ENCODE measurements at regions of chr14 and their contacts with region 1.

Region 1: DNA sequence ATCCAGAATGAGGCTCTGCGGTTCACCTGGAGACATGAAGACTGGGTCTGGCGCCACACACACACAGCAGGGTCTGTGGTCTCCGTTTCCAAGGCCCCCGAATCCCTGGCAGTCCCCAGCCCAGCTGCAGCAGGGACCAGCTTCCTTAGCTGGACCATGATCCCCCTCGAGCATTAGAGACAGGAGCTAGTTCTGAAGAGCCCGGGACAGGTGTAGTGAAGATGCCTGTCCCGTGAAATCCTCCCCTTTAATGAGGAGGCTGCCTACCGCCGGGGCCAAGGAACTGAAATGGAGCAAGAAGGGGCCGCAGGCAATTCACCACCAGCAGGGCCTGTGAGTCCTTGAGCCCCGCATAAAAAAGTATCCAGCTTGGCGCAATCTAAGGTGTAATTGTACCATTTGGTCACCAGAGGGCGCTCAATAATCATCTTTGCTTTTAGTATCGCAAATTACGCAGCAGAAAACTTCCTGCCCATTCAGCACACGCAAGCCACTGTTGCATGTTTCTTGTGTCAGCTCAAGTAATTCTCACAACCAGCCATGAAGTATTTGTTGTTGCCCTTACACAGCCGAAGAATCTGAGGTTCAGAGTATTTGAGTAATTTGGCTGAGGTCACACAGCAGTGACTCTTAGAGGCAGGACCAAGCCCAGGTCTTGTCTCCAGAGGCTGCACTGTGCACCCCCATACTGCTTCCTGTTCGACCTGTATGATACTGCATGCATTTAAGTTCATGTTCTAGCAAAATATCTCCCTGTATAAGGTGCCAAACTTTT is 54.3 kb upstream of the PPP2R5C start:
- DNase-seq: peak; percentile 43 to 94 (median 61)
- ATAC-seq: peak; percentile 50 to 69 (median 62)
- H3K4me3 ChIP-seq: peak overlapping the region in 1 of 2 donors; percentile 19
- H3K4me3 Mint-ChIP-seq: peak overlapping the region; percentile 37 to 68 (median 50)
- H3K27ac ChIP-seq: peak overlapping the region; percentile 85
- H3K27ac Mint-ChIP-seq: peak overlapping the region; percentile 89 to 92
- H3K4me1 ChIP-seq: peaks cover 16 to 59% of the 10 kb centered on the region in 2 experiments
- H3K4me1 Mint-ChIP-seq: peaks cover 41 to 56% (median 42%) of the 10 kb centered on the region in 3 donors
- H3K27me3 ChIP-seq: no peaks in the 10 kb centered on the region
- H3K27me3 Mint-ChIP-seq: no peaks in the 10 kb centered on the region

Region 2: DNA sequence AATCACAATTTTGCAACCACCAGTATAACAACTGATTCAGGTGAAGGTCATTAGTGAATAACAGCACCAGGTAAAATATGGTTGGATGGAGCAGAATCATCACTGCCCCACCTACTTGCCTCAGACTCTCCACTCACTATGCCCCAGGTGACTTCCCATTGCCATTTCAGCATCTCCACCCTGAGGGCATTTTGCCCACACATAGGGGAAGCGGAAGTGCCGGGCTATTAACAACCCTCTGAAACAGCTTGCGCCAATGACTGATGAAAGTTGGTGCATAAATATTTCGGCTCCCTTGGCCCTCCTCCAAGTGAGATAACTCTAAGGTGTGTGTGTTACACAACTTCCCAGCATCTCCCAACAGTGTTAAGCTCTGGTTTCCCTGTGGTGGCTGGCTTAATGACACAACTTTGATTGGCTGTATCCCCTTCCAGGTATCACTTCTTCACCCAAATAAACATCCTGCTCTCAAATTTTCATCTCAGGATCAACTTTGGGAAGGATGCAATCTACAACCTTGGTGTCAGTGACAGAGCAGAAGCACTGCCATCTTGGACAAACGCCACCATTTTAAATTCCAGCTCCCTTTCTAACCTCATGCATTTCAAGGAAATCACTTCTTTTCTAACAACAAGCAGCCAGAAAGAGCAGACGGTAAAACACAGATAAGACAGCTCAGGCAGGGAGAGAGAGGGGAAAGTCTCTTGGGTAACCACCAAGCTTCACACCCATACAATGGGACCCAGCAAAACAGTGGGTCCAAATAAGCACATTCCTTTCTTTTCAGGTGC is 19.3 kb before region 1 on chr14:
- CTCF ChIA-PET with region 1: no interaction called
- POLR2A ChIA-PET with region 1: no interaction called
- DNase-seq: no peak
- ATAC-seq: no peak
- H3K4me3 ChIP-seq: no peak overlapping the region
- H3K4me3 Mint-ChIP-seq: no peak overlapping the region
- H3K27ac ChIP-seq: no peak overlapping the region
- H3K27ac Mint-ChIP-seq: no peak overlapping the region
- H3K4me1 ChIP-seq: no peaks in the 10 kb centered on the region
- H3K4me1 Mint-ChIP-seq: no peaks in the 10 kb centered on the region
- H3K27me3 ChIP-seq: peaks cover 0 to 5% of the 10 kb centered on the region in 2 experiments
- H3K27me3 Mint-ChIP-seq: peaks cover 6 to 21% of the 10 kb centered on the region in 2 donors

Region 3: GRCh38 chr14:101721951-101722661 is 14.9 kb after region 1 on chr14:
- CTCF ChIA-PET with region 1: interaction called in 1 of 2 experiments, 37 read pairs
- POLR2A ChIA-PET with region 1: interaction called in 1 of 2 experiments, 3 read pairs
- DNase-seq: peak; percentile 52 to 94 (median 84)
- ATAC-seq: peak; percentile 83 to 87 (median 84)
- H3K4me3 ChIP-seq: peak overlapping the region; percentile 30 to 42
- H3K4me3 Mint-ChIP-seq: peak overlapping the region; percentile 75 to 78 (median 78)
- H3K27ac ChIP-seq: peak overlapping the region; percentile 99
- H3K27ac Mint-ChIP-seq: peak overlapping the region; percentile 99 to 100
- H3K4me1 ChIP-seq: peaks cover 18 to 67% of the 10 kb centered on the region in 2 experiments
- H3K4me1 Mint-ChIP-seq: peaks cover 56 to 73% (median 59%) of the 10 kb centered on the region in 3 donors
- H3K27me3 ChIP-seq: no peaks in the 10 kb centered on the region
- H3K27me3 Mint-ChIP-seq: no peaks in the 10 kb centered on the region

Region 4: DNA sequence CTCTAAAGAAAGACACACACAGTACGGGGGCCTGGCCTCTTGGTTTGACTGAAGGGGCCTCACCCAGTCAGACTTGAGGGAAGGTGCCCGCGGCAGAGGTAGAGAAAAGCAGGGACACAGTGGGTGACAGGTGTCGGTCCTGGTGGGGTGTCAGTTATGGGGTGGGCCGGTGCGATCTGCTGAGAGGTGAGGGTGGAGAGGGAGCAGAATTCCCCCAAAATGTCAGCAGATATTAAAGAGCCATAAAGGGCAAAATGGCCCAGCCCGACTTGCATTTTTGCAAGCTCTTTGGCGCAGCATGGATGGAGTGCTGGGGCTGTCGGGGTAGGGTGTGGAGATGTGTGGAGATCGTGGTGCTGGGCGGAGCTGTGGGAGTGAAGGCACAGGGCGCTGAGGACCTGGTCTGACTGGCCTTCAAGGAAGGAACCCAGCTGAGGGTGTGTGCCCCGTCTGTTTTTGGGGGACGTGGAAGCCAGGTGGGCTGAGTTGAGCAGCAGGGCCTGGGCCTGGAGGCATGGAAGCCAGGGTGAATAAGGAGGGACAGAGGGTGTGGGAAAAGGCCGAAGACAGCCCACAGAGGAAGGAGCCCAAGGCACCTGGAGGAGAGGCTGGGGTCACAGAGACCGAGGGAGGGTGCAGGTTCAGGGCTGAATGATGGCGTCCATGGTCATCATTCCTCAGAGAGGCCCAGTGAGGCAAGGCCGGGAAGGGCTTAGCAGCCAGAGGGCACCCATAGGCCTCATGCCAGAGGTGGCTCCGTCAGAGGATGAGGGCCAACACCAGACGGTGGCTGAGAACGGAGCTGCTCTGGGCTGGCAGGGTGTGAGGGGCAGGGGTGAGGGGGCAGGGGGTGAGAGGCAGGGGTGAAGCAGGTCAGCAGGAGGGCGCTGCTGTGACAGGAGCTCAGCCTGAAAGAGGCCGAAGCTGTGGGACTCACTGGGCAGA is 208.9 kb after region 1 on chr14:
- CTCF ChIA-PET with region 1: no interaction called
- POLR2A ChIA-PET with region 1: no interaction called
- DNase-seq: no peak
- ATAC-seq: peak in 1 of 4 experiments; percentile 9
- H3K4me3 ChIP-seq: no peak overlapping the region
- H3K4me3 Mint-ChIP-seq: no peak overlapping the region
- H3K27ac ChIP-seq: no peak overlapping the region
- H3K27ac Mint-ChIP-seq: peak overlapping the region; percentile 34 to 52
- H3K4me1 ChIP-seq: no peaks in the 10 kb centered on the region
- H3K4me1 Mint-ChIP-seq: peaks cover 0 to 13% (median 2%) of the 10 kb centered on the region in 3 donors
- H3K27me3 ChIP-seq: no peaks in the 10 kb centered on the region
- H3K27me3 Mint-ChIP-seq: no peaks in the 10 kb centered on the region

Measured in T-cell (primary cell).